Dendritic cell treated with granulocyte-macrophage colony-stimulating factor and Interleukin-4, amounts not matched to agents 40 ng/mL and 50 ng/mL, for 4 days (primary cell): ENCODE measurements at regions of chr22 and their contacts with region 1.

Region 1: DNA sequence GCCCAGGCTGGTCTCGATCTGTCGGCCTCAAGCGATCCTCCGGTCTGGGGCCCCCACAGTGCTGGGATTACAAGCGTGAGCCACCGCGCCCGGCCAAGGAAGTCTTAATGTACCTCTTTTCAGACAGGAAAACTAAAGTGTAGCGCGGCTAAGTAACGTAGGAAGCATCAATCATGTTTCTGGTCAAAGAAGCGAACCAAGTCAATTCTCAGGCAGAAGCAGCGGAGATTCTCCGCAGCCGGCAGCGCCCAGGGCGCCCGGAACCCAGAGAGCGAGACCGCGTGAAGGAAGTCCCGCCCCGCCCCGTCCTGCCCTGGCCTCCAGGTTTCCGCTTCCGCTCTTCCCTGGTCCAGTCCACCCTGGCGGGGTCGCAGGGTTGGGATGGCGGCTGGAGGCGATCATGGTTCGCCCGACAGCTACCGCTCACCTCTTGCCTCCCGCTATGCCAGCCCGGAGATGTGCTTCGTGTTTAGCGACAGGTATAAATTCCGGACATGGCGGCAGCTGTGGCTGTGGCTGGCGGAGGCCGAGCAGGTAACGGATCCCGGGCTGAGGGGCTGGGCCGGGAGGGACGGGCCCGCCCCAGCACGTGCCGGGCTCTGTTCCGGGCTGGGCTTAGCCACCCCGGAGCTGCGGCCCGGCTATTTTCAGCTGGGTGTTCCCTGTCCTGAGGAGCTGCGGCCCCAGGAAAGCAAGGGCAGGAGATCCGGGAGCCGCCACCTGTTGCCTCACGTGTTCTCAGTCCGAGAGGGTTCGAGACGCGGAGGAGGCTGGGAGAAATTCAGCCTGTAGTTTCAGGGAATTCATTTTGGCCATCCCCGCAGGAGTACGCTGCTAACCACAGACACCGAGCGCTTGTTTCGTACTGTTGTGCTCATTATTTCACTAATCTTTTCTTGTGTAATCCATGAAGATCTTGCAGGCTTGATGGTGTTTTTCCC is at the start of gene ADSL:
- H3K4me3 Mint-ChIP-seq: peak within 1 kb of the TSS; percentile 92
- H3K27ac Mint-ChIP-seq: peak within 1 kb of the TSS; percentile 93
- H3K4me1 Mint-ChIP-seq: peaks cover 28% of the 10 kb centered on the region
- H3K27me3 Mint-ChIP-seq: peaks cover 2% of the 10 kb centered on the region

Region 2: GRCh38 chr22:40044102-40044869 is 302.2 kb before region 1 on chr22:
- intact Hi-C with region 1: loop called (anchors 5 kb)
- H3K4me3 Mint-ChIP-seq: peak overlapping the region; percentile 86
- H3K27ac Mint-ChIP-seq: peak overlapping the region; percentile 95
- H3K4me1 Mint-ChIP-seq: peaks cover 50% of the 10 kb centered on the region
- H3K27me3 Mint-ChIP-seq: peaks cover 6% of the 10 kb centered on the region